CD4-positive, alpha-beta T cell (primary cell): ENCODE measurements at regions of chr1 and their contacts with region 1.

Region 1: GRCh38 chr1:160539990-160540858 is 17.2 kb upstream of the SLAMF6 start:
- DNase-seq: peak in 12 of 14 experiments; percentile 19 to 91 (median 34)
- ATAC-seq: peak; percentile 90
- H3K4me3 ChIP-seq: peak overlapping the region; percentile 13
- H3K4me3 Mint-ChIP-seq: peak overlapping the region; percentile 59
- H3K27ac ChIP-seq: peak overlapping the region; percentile 54 to 68
- H3K27ac Mint-ChIP-seq: peak overlapping the region; percentile 88
- H3K4me1 ChIP-seq: peaks cover 55% of the 10 kb centered on the region
- H3K4me1 Mint-ChIP-seq: peaks cover 64% of the 10 kb centered on the region
- H3K27me3 ChIP-seq: no peaks in the 10 kb centered on the region
- H3K27me3 Mint-ChIP-seq: no peaks in the 10 kb centered on the region
- CTCF ChIP-seq: no peak

Region 2: DNA sequence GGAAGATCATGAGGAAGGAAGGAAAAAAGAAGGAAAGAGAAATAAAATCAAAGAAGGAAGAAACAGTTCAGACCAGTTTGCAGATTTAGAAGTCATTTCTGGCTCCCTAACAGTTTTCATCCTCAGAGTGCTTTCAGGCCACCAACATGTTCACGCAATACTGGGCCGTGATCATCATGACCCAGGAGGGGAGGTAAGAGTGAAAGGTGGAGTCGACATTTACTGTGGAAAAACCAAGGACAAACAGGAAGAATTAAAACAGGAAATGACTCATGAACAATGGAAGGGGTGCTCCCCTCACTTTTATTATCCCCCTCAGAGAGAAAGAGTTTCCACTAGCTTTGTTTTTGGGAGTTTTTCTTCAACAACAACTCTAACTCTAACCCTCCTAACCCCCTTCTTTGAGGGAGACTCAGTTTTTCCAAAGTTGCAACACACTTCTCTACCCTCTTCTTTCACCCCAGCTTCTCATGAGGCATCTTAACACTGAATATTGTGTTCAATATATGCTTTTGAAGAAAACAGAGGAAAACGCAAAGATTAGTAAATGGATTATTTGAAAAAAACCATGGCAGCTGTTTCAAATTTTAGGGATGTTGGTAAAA is 79.4 kb before region 1 on chr1:
- CTCF ChIA-PET with region 1: no interaction called
- POLR2A ChIA-PET with region 1: no interaction called
- intact Hi-C with region 1: no loop called
- DNase-seq: peak in 3 of 14 experiments; percentile 29 to 38 (median 32)
- ATAC-seq: peak; percentile 41
- H3K4me3 ChIP-seq: peak overlapping the region; percentile 30
- H3K4me3 Mint-ChIP-seq: peak overlapping the region; percentile 57
- H3K27ac ChIP-seq: peak overlapping the region; percentile 33 to 51
- H3K27ac Mint-ChIP-seq: peak overlapping the region; percentile 63
- H3K4me1 ChIP-seq: peaks cover 23% of the 10 kb centered on the region
- H3K4me1 Mint-ChIP-seq: peaks cover 60% of the 10 kb centered on the region
- H3K27me3 ChIP-seq: no peaks in the 10 kb centered on the region
- H3K27me3 Mint-ChIP-seq: no peaks in the 10 kb centered on the region
- CTCF ChIP-seq: no peak

Region 3: DNA sequence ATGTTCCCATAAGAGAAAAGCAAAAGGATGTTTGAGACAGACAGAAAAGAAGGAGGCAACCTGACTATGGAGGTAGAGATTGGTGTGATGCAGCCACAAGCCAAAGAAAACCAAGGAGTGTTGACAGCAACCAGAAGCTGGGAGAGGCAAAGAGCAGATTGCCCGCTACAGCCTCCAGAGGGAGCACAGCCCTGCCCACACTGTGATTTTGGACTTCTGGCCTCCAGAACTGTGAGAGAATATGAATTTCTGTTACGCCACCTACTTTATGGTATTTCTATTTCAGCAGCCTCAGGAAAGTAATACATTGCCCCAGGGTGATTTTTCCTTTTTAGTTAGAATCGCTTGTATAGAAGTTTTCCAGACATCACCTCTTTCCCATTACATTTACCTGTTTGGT is 45.6 kb before region 1 on chr1:
- CTCF ChIA-PET with region 1: no interaction called
- POLR2A ChIA-PET with region 1: no interaction called
- intact Hi-C with region 1: no loop called
- DNase-seq: peak in 3 of 14 experiments; percentile 18 to 43 (median 30)
- ATAC-seq: no peak
- H3K4me3 ChIP-seq: no peak overlapping the region
- H3K4me3 Mint-ChIP-seq: no peak overlapping the region
- H3K27ac ChIP-seq: no peak overlapping the region
- H3K27ac Mint-ChIP-seq: no peak overlapping the region
- H3K4me1 ChIP-seq: no peaks in the 10 kb centered on the region
- H3K4me1 Mint-ChIP-seq: peaks cover 15% of the 10 kb centered on the region
- H3K27me3 ChIP-seq: no peaks in the 10 kb centered on the region
- H3K27me3 Mint-ChIP-seq: no peaks in the 10 kb centered on the region
- CTCF ChIP-seq: peak; percentile 11

Region 4: DNA sequence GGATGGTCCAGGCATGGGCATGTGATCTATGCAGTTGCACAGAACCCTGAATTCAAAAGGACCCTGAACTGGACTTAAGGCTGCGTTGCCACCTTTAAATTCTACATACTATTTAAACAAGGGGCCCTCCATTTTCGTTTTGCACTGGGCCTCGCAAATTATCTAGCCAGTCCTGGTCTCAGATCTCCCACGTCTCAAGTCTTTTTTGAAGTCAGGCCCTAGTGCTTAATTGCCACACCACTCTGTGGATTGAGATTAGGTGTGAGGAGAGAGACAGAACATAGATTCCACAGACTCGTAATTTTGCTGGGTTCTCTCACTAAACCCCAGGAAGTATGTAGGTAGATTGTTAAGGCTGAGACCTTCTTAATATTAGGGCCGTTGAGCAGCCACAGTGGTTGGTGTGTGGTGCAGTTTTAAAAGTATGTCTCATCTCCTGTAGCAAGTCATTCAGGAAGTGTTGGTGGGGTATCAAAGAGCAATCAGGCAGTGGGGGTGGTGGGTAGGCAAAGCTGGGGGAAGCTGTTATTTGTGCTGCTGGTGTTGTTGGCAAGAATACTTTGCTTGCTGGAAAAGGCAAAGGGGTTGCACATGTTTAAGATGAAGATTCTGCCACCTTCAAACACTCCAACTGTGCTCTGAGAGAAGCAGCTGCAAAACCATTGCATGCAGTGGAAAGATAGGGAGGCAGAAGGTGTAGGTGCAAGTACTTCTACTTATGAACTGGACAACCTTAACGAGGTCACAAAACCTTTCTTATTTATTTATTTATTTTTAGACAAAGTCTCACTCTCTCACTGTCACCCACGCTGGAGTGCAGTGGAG is 27.8 kb after region 1 on chr1:
- CTCF ChIA-PET with region 1: no interaction called
- POLR2A ChIA-PET with region 1: interaction called, 12 read pairs
- intact Hi-C with region 1: no loop called
- DNase-seq: peak; percentile 31 to 83 (median 66)
- ATAC-seq: peak; percentile 94
- H3K4me3 ChIP-seq: peak overlapping the region; percentile 18
- H3K4me3 Mint-ChIP-seq: peak overlapping the region; percentile 62
- H3K27ac ChIP-seq: peak overlapping the region; percentile 66 to 76
- H3K27ac Mint-ChIP-seq: peak overlapping the region; percentile 87
- H3K4me1 ChIP-seq: peaks cover 74% of the 10 kb centered on the region
- H3K4me1 Mint-ChIP-seq: peaks cover 86% of the 10 kb centered on the region
- H3K27me3 ChIP-seq: no peaks in the 10 kb centered on the region
- H3K27me3 Mint-ChIP-seq: no peaks in the 10 kb centered on the region
- CTCF ChIP-seq: no peak